ENCODE measurements at regions of chr14 and their contacts with region 1.

Region 1: GRCh38 chr14:60184146-60184904 is 19.1 kb upstream of the DHRS7 start:
- DNase-seq: peak in 7 of 9 donors; percentile 59 to 80 (median 71)
- ATAC-seq: peak; percentile 85
- H3K4me3 ChIP-seq: peak overlapping the region; percentile 48
- H3K4me3 Mint-ChIP-seq: peak overlapping the region; percentile 73 to 84 (median 80)
- H3K27ac ChIP-seq: peak overlapping the region; percentile 66
- H3K27ac Mint-ChIP-seq: peak overlapping the region; percentile 34 to 94 (median 78)
- H3K4me1 ChIP-seq: peaks cover 0 to 6% of the 10 kb centered on the region in 2 donors
- H3K4me1 Mint-ChIP-seq: peaks cover 4 to 15% (median 9%) of the 10 kb centered on the region in 7 donors
- H3K27me3 ChIP-seq: no peaks in the 10 kb centered on the region
- H3K27me3 Mint-ChIP-seq: peaks cover 0 to 4% (median 0%) of the 10 kb centered on the region in 5 donors

Region 2: GRCh38 chr14:59126710-59127432 is 1057.5 kb before region 1 on chr14:
- CTCF ChIA-PET with region 1: no interaction called
- POLR2A ChIA-PET with region 1: no interaction called
- intact Hi-C with region 1: loop called (anchors 1 to 5 kb)
- DNase-seq: peak in 6 of 9 donors; percentile 35 to 65 (median 56)
- ATAC-seq: peak; percentile 82
- H3K4me3 ChIP-seq: no peak overlapping the region
- H3K4me3 Mint-ChIP-seq: no peak overlapping the region
- H3K27ac ChIP-seq: no peak overlapping the region
- H3K27ac Mint-ChIP-seq: no peak overlapping the region
- H3K4me1 ChIP-seq: no peaks in the 10 kb centered on the region
- H3K4me1 Mint-ChIP-seq: no peaks in the 10 kb centered on the region
- H3K27me3 ChIP-seq: peaks cover 0 to 3% of the 10 kb centered on the region in 2 donors
- H3K27me3 Mint-ChIP-seq: peaks cover 14 to 30% (median 17%) of the 10 kb centered on the region in 5 donors

Region 3: GRCh38 chr14:59576332-59577294 is 607.7 kb before region 1 on chr14 and contains the start of gene CCDC175:
- CTCF ChIA-PET with region 1: interaction called, 3 read pairs
- POLR2A ChIA-PET with region 1: no interaction called
- intact Hi-C with region 1: loop called (anchors 2 to 5 kb)
- DNase-seq: peak; percentile 66 to 84 (median 78)
- ATAC-seq: peak; percentile 98
- H3K4me3 ChIP-seq: peak within 1 kb of the TSS; percentile 63
- H3K4me3 Mint-ChIP-seq: peak within 1 kb of the TSS; percentile 66 to 86 (median 78)
- H3K27ac ChIP-seq: no peak within 1 kb of the TSS
- H3K27ac Mint-ChIP-seq: peak within 1 kb of the TSS in 3 of 9 donors; percentile 8 to 26 (median 14)
- H3K4me1 ChIP-seq: peaks cover 3 to 4% of the 10 kb centered on the region in 2 donors
- H3K4me1 Mint-ChIP-seq: peaks cover 4 to 9% (median 7%) of the 10 kb centered on the region in 7 donors
- H3K27me3 ChIP-seq: no peaks in the 10 kb centered on the region
- H3K27me3 Mint-ChIP-seq: peaks cover 20 to 46% (median 29%) of the 10 kb centered on the region in 5 donors
- total RNA-seq, gene CCDC175: not detected

Region 4: GRCh38 chr14:59679872-59680271 is 504.5 kb before region 1 on chr14:
- CTCF ChIA-PET with region 1: no interaction called
- POLR2A ChIA-PET with region 1: no interaction called
- intact Hi-C with region 1: no loop called
- DNase-seq: no peak
- ATAC-seq: no peak
- H3K4me3 ChIP-seq: no peak overlapping the region
- H3K4me3 Mint-ChIP-seq: no peak overlapping the region
- H3K27ac ChIP-seq: no peak overlapping the region
- H3K27ac Mint-ChIP-seq: no peak overlapping the region
- H3K4me1 ChIP-seq: no peaks in the 10 kb centered on the region
- H3K4me1 Mint-ChIP-seq: no peaks in the 10 kb centered on the region
- H3K27me3 ChIP-seq: no peaks in the 10 kb centered on the region
- H3K27me3 Mint-ChIP-seq: peaks cover 4 to 35% (median 18%) of the 10 kb centered on the region in 5 donors

Region 5: GRCh38 chr14:59964251-59965007 is 219.9 kb before region 1 on chr14:
- CTCF ChIA-PET with region 1: interaction called, 145 read pairs
- POLR2A ChIA-PET with region 1: interaction called, 5 read pairs
- intact Hi-C with region 1: loop called (anchors 1 kb)
- DNase-seq: peak in 6 of 9 donors; percentile 6 to 38 (median 20)
- ATAC-seq: peak; percentile 44
- H3K4me3 ChIP-seq: no peak overlapping the region
- H3K4me3 Mint-ChIP-seq: peak overlapping the region; percentile 77 to 95 (median 88)
- H3K27ac ChIP-seq: no peak overlapping the region
- H3K27ac Mint-ChIP-seq: peak overlapping the region in 8 of 9 donors; percentile 40 to 99 (median 88)
- H3K4me1 ChIP-seq: no peaks in the 10 kb centered on the region
- H3K4me1 Mint-ChIP-seq: peaks cover 3 to 14% (median 10%) of the 10 kb centered on the region in 7 donors
- H3K27me3 ChIP-seq: no peaks in the 10 kb centered on the region
- H3K27me3 Mint-ChIP-seq: peaks cover 0 to 15% (median 5%) of the 10 kb centered on the region in 5 donors

Region 6: GRCh38 chr14:60091550-60092530 is 92.5 kb before region 1 on chr14 and contains the start of gene PCNX4:
- CTCF ChIA-PET with region 1: interaction called, 4 read pairs
- POLR2A ChIA-PET with region 1: interaction called, 5 read pairs
- intact Hi-C with region 1: loop called (anchors 1 kb)
- DNase-seq: peak; percentile 79 to 95 (median 94)
- ATAC-seq: peak; percentile 95
- H3K4me3 ChIP-seq: peak within 1 kb of the TSS; percentile 94
- H3K4me3 Mint-ChIP-seq: peak within 1 kb of the TSS; percentile 88 to 98 (median 95)
- H3K27ac ChIP-seq: peak within 1 kb of the TSS; percentile 96
- H3K27ac Mint-ChIP-seq: peak within 1 kb of the TSS; percentile 90 to 99 (median 96)
- H3K4me1 ChIP-seq: peaks cover 14 to 16% of the 10 kb centered on the region in 2 donors
- H3K4me1 Mint-ChIP-seq: peaks cover 28 to 48% (median 41%) of the 10 kb centered on the region in 7 donors
- H3K27me3 ChIP-seq: peaks cover 0 to 4% of the 10 kb centered on the region in 2 donors
- H3K27me3 Mint-ChIP-seq: peaks cover 0 to 5% (median 0%) of the 10 kb centered on the region in 5 donors
- total RNA-seq, gene PCNX4: 34.9 to 48.2 (median 43.3) TPM

Region 7: DNA sequence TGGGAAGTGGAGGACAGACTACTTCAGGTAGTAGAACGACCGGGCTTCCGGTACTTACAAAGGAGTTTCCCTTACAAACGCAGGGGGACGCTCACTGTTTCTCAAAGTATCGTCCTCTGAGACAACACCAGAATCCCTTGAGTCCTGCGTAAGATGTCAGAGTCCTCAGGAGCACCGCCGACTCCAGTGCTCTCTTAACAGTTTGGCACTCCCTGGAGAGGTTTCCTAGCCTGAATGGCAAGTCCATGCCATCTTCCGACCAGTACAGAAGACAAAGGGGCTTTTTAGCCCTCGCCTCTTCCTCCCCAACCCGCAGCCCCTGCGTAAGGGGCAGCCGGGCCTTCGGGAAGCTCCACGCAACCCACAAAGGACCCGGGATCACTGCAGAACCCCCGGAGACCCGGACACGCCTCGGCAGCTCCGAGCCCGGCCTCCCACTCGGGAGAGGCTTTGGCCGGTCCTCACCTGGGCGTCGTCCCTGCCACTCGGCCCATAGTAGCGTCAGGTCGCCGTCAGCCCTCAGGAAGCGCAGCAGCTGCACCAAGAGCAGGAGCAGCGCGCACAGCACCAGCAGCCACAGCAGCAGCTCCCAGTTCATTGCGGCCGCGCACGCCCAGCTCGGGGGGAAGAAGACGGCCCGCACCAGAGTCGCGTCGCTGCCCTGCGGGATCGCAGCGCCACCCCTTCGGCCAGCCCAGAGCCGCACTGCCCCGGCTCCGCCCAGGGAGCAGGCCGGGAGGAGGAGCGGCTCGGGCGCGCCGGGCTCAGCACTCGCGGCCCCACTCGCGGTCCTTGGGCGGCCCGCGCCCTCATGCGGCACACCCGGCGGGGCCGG is 19.4 kb before region 1 on chr14 and contains the start of gene DHRS7:
- CTCF ChIA-PET with region 1: interaction called, 12 read pairs
- POLR2A ChIA-PET with region 1: interaction called, 14 read pairs
- intact Hi-C with region 1: loop called (anchors 1 kb)
- DNase-seq: peak; percentile 47 to 75 (median 60)
- ATAC-seq: peak; percentile 85
- H3K4me3 ChIP-seq: peak within 1 kb of the TSS; percentile 85
- H3K4me3 Mint-ChIP-seq: peak within 1 kb of the TSS; percentile 86 to 99 (median 95)
- H3K27ac ChIP-seq: peak within 1 kb of the TSS; percentile 90
- H3K27ac Mint-ChIP-seq: peak within 1 kb of the TSS; percentile 91 to 99 (median 97)
- H3K4me1 ChIP-seq: peaks cover 20 to 27% of the 10 kb centered on the region in 2 donors
- H3K4me1 Mint-ChIP-seq: peaks cover 22 to 53% (median 42%) of the 10 kb centered on the region in 7 donors
- H3K27me3 ChIP-seq: no peaks in the 10 kb centered on the region
- H3K27me3 Mint-ChIP-seq: no peaks in the 10 kb centered on the region
- total RNA-seq, gene DHRS7: 29.9 to 50.9 (median 38.0) TPM

Region 8: DNA sequence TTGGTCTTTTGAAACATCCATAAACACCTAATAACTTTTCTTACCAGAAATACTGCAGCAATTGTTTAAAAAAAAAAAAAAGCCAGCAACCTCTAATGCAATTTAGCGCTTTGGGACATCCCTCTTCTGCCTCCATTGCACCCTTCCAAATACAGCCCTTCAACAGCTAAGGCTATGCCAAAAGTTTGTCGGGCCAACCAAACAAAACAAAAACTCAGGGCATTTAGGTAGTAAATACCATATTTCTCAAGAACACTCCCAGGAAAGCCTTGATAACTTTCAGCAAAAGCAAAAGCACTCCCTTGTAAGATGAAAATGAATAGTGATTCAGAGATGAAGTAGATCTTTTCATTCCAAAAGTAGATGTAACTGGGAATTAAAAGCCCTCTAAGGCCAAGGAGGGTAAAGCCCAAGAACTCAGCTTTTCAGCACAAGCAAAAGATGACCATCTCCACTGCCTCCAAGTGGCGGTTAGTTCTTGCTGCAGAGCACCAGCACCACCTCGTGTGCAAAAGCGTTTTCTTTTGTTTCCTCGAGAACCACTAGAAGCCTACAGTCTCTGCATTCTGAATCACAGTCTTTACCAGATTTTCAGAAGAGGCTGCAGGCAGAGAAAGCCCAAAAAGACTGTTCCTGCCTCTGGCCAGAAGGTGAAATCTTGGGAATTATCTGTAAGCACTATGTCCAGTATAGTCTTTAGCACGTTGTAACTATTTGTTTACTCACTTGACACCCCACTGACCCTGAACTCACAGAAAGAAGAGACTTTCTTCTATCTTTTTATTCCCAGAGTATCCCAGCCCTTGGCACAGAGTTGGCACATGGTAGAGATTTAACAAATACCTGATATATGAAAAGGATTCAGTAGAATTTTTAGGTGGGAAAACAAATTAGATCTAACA is 377.8 kb after region 1 on chr14:
- CTCF ChIA-PET with region 1: no interaction called
- POLR2A ChIA-PET with region 1: no interaction called
- intact Hi-C with region 1: loop called in 1 of 2 experiments (anchors 5 kb)
- DNase-seq: peak in 2 of 9 donors; percentile 2 to 5
- ATAC-seq: no peak
- H3K4me3 ChIP-seq: no peak overlapping the region
- H3K4me3 Mint-ChIP-seq: no peak overlapping the region
- H3K27ac ChIP-seq: no peak overlapping the region
- H3K27ac Mint-ChIP-seq: no peak overlapping the region
- H3K4me1 ChIP-seq: no peaks in the 10 kb centered on the region
- H3K4me1 Mint-ChIP-seq: no peaks in the 10 kb centered on the region
- H3K27me3 ChIP-seq: no peaks in the 10 kb centered on the region
- H3K27me3 Mint-ChIP-seq: peaks cover 0 to 14% (median 0%) of the 10 kb centered on the region in 5 donors

Measured in naive thymus-derived CD4-positive, alpha-beta T cell (primary cell).